Right ventricle myocardium inferior (tissue), 1 donor: ENCODE measurements at regions of chr3 and their contacts with region 1.

Region 1: DNA sequence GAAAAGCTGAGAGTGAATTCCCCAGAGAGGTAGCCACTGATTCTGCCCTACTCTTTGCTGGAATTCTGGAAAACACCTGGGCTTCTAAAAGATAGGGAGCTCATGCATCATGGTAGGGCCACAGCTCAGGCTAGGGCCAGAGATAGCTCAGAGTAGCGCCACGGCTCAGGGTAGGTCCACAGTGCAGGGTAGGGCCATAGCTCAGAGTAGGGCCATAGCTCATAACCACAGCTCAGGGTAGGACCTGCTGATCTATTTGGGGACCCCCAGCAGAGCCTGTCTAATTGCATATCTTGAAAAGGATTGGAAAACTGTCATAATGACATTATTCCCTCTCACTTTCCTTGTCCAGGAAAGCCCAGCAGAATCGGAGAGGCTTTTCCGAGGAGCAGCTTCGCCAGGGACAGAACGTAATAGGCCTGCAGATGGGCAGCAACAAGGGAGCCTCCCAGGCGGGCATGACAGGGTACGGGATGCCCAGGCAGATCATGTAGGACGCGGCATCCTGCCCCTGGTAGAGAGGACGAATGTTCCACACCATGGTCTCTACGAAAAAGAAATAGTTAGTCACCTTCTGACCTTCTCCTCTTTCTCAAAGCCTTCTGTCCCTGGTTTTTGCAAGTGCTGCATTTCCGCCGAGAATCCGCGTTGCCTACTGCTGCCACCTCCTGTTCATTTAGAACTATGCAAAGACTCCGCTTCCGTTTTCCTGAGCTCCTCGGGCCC is 14.5 kb downstream of the TAGLN3 start:
- DNase-seq: no peak
- ATAC-seq: peak; percentile 81

Region 2: GRCh38 chr3:111668912-111669488 is 344.2 kb before region 1 on chr3:
- intact Hi-C with region 1: loop called (anchors 1 kb)
- DNase-seq: no peak
- ATAC-seq: peak; percentile 81

Region 3: DNA sequence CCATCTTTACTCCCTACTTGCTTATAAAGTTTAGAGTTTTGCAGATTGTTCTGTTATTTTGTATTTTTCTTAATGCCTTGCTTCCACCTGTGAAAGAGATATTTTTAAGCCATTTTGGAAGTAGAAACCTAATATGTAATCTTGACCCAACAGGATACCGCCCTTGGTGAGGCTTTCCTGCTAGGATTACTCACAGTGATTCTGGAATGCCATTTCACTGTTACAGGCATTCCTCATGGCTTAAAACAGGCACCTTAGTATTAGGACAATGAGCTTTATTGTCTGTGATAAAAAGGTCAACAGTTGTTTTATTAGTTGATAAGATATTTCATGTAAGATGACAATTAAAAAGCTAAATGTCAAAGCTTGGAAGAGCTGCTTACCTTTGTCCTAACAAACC is 95.9 kb before region 1 on chr3:
- intact Hi-C with region 1: no loop called
- DNase-seq: no peak
- ATAC-seq: no peak

Region 4: GRCh38 chr3:111967651-111968274 is 45.5 kb before region 1 on chr3:
- intact Hi-C with region 1: loop called (anchors 5 kb)
- DNase-seq: peak; percentile 82
- ATAC-seq: peak; percentile 76

Region 5: GRCh38 chr3:111989061-111989678 is 24.1 kb before region 1 on chr3:
- intact Hi-C with region 1: loop called (anchors 1 kb)
- DNase-seq: no peak
- ATAC-seq: peak; percentile 67

Region 6: GRCh38 chr3:112043603-112044201 is 30.5 kb after region 1 on chr3:
- intact Hi-C with region 1: loop called (anchors 2 kb)
- DNase-seq: no peak
- ATAC-seq: peak; percentile 87